ENCODE measurements at regions of chr3 and their contacts with region 1.

Region 1: DNA sequence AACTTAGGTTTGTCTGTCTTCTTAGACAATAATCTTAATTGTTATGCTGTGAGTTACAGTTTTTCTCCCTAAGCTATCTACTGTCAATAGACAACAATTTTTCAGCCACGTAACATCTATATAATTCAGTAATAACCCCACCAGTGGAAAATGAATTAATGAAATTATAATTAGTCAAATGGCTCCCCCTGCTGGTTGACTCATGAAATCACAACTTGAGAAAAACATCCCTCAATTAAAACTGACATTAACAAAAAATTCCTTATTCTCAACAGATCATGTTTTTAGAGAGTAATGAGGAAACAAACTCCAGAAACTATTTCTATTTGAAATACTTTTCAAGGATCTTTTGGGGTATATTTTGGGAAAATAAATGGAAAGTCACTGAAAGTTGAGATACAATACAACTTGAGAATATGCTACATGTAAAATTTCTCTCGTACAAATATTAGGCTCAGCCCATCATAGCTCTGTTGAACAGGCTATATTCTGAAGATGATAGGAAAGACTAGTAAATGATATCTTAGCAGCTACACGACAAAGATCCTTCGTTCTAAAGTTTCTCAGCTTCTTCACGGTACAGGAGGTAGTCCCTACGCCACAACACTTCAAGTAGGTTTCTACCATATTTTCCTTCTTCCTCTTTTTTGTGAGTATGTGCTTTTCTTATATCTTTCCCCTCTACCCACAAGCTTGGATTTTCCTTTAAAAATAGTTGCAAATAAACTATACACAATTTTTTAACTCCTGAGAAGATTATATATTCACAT is 20.7 kb downstream of the PPP1R2 start:
- DNase-seq: peak in 6 of 35 experiments; percentile 19 to 68 (median 28)
- ATAC-seq: no peak
- H3K4me3 ChIP-seq: no peak overlapping the region
- H3K4me3 Mint-ChIP-seq: no peak overlapping the region
- H3K27ac ChIP-seq: peak overlapping the region; percentile 2
- H3K27ac Mint-ChIP-seq: peak overlapping the region; percentile 50 to 83
- H3K4me1 ChIP-seq: peaks cover 18 to 30% of the 10 kb centered on the region in 2 experiments
- H3K4me1 Mint-ChIP-seq: peaks cover 46 to 55% (median 54%) of the 10 kb centered on the region in 3 donors
- H3K27me3 ChIP-seq: no peaks in the 10 kb centered on the region
- H3K27me3 Mint-ChIP-seq: no peaks in the 10 kb centered on the region

Region 2: DNA sequence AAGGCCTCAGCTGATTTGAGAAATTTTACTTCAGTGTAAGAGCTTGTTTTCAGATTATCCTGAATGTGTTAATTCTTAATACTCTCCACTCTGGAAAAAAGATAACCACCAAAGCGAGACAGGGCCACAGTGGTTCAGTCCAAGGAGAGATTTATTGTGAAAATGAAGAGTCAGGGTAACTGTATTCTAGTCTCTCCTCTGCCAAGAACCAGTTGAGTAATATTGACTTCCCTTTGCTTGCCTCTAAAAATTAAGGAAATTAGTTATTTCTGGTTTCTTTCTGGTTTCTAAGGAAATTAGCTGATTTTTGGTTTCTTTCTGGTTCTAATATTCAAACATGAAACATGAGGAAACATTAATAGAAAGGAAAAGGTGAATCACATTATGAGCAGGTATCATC is 14.3 kb before region 1 on chr3:
- CTCF ChIA-PET with region 1: interaction called in 1 of 2 experiments, 7 read pairs
- POLR2A ChIA-PET with region 1: interaction called, 8 to 18 read pairs
- DNase-seq: peak in 1 of 35 experiments; percentile 0
- ATAC-seq: no peak
- H3K4me3 ChIP-seq: no peak overlapping the region
- H3K4me3 Mint-ChIP-seq: no peak overlapping the region
- H3K27ac ChIP-seq: no peak overlapping the region
- H3K27ac Mint-ChIP-seq: peak overlapping the region; percentile 65 to 77
- H3K4me1 ChIP-seq: no peaks in the 10 kb centered on the region
- H3K4me1 Mint-ChIP-seq: peaks cover 21 to 24% (median 23%) of the 10 kb centered on the region in 3 donors
- H3K27me3 ChIP-seq: no peaks in the 10 kb centered on the region
- H3K27me3 Mint-ChIP-seq: no peaks in the 10 kb centered on the region

Region 3: GRCh38 chr3:195542698-195543499 is 20.5 kb after region 1 on chr3 and contains the start of gene PPP1R2:
- CTCF ChIA-PET with region 1: interaction called, 5 to 12 read pairs
- POLR2A ChIA-PET with region 1: interaction called, 3 to 10 read pairs
- DNase-seq: peak; percentile 74 to 96 (median 86)
- ATAC-seq: peak; percentile 80 to 91 (median 84)
- H3K4me3 ChIP-seq: peak within 1 kb of the TSS; percentile 85 to 93
- H3K4me3 Mint-ChIP-seq: peak within 1 kb of the TSS; percentile 89 to 93 (median 93)
- H3K27ac ChIP-seq: peak within 1 kb of the TSS; percentile 94
- H3K27ac Mint-ChIP-seq: peak within 1 kb of the TSS; percentile 98
- H3K4me1 ChIP-seq: peaks cover 48 to 72% of the 10 kb centered on the region in 2 experiments
- H3K4me1 Mint-ChIP-seq: peaks cover 68 to 87% (median 76%) of the 10 kb centered on the region in 3 donors
- H3K27me3 ChIP-seq: no peaks in the 10 kb centered on the region
- H3K27me3 Mint-ChIP-seq: no peaks in the 10 kb centered on the region
- total RNA-seq, gene PPP1R2: 113 to 154 (median 123) TPM

Region 4: DNA sequence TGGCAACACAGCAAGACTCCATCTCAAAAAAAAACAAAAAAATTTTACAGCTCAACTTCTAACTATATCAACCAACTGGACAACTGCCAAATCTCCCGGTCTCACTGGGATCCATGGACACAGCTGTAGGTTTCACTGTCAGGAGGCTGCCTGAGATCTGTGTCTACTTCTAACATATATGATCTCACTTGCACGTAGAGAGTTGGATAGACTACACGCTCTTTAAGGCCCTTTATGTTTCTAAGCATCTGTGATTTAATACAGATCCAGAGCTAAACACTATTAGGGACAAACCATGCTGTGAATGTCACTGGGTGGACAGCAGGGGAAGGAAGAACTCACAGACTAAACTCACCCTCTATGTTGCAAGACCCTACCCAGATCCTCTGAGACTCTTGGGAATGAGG is 74.3 kb after region 1 on chr3:
- CTCF ChIA-PET with region 1: no interaction called
- POLR2A ChIA-PET with region 1: no interaction called
- DNase-seq: no peak
- ATAC-seq: no peak
- H3K4me3 ChIP-seq: no peak overlapping the region
- H3K4me3 Mint-ChIP-seq: no peak overlapping the region
- H3K27ac ChIP-seq: no peak overlapping the region
- H3K27ac Mint-ChIP-seq: no peak overlapping the region
- H3K4me1 ChIP-seq: no peaks in the 10 kb centered on the region
- H3K4me1 Mint-ChIP-seq: peaks cover 0 to 5% (median 0%) of the 10 kb centered on the region in 3 donors
- H3K27me3 ChIP-seq: no peaks in the 10 kb centered on the region
- H3K27me3 Mint-ChIP-seq: no peaks in the 10 kb centered on the region

Measured in T-cell (primary cell).